ENCODE measurements at regions of chr1 and their contacts with region 1.

Region 1: DNA sequence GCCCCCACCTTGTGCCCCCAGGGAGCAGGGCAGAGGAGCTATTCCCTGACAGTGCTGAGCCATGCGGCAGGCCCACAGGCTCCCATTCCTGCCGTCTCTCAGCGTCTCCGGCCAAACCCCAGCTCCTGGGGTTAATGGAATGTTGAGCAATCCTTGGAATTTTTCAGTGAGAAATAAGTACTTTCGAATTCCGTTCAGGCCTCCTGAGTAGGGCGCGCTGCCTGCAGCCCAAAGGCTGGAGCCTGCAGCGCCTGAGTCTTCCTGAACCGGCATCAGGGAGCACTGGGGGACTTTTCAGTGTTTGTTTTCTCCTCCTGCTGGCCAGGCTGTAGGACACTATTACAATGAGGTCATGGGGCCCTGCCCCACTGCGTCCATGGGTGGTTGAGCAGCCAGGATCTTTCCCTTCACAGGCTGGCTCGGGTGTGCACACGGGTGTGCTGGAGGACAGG is 33.3 kb upstream of the CSF1 start:
- DNase-seq: peak; percentile 57 to 84 (median 65)
- ATAC-seq: peak; percentile 65 to 94 (median 90)
- H3K4me3 ChIP-seq: peak overlapping the region in 2 of 12 donors; percentile 2 to 13
- H3K27ac ChIP-seq: peak overlapping the region; percentile 62 to 86 (median 80)
- H3K4me1 ChIP-seq: peaks cover 0 to 50% (median 20%) of the 10 kb centered on the region in 12 donors
- H3K27me3 ChIP-seq: no peaks in the 10 kb centered on the region
- CTCF ChIP-seq: peak in 8 of 12 donors; percentile 8 to 44 (median 25)
- POLR2A ChIP-seq: no peak

Region 2: DNA sequence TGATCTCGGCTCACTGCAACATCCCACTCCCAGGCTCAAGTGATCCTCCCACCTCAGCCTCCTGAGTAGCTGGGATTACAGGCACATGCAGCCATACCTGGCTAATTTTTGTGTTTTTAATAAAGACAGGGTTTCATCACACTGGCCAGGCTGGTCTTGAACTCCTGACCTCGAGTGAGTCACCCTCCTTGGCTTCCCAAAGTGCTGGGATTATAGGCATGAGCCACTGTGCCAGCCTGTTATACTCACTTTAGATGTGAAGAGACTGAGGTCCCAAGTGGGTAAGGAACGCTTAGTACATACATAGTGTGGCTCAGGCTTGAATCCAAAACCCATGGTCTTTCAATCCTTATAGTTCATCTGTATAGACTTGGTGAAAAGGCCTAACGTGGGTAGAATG is 49.9 kb before region 1 on chr1:
- intact Hi-C with region 1: loop called in 1 of 10 experiments (anchors 5 kb)
- DNase-seq: no peak
- ATAC-seq: no peak
- H3K4me3 ChIP-seq: no peak overlapping the region
- H3K27ac ChIP-seq: peak overlapping the region in 1 of 12 donors; percentile 61
- H3K4me1 ChIP-seq: peaks cover 0 to 53% (median 29%) of the 10 kb centered on the region in 12 donors
- H3K27me3 ChIP-seq: no peaks in the 10 kb centered on the region
- CTCF ChIP-seq: no peak
- POLR2A ChIP-seq: no peak

Region 3: DNA sequence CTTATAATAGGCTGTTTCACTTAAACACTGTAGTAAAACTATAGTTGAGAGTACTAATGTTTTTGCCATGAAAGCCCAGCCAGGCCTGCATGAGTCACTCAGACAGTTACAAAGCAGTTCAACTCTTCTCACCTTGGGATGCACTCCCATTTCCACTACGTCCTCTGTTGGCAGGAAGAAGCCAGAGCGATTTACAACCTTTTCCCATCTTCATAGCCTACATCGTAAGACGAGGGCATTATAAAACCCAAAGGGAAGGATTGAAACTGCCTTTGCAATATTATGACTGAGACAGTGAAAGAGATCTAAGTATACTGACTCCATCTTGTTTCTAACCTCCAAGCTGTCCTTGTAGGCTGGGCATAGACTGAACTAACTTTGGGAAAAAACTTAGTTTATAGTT is 38.5 kb before region 1 on chr1:
- intact Hi-C with region 1: loop called in 1 of 10 experiments (anchors 5 kb)
- DNase-seq: no peak
- ATAC-seq: no peak
- H3K4me3 ChIP-seq: no peak overlapping the region
- H3K27ac ChIP-seq: peak overlapping the region in 1 of 12 donors; percentile 48
- H3K4me1 ChIP-seq: peaks cover 0 to 7% (median 0%) of the 10 kb centered on the region in 12 donors
- H3K27me3 ChIP-seq: no peaks in the 10 kb centered on the region
- CTCF ChIP-seq: no peak
- POLR2A ChIP-seq: no peak

Region 4: GRCh38 chr1:109923131-109923945 is 46.0 kb after region 1 on chr1:
- intact Hi-C with region 1: no loop called
- DNase-seq: no peak
- ATAC-seq: no peak
- H3K4me3 ChIP-seq: peak overlapping the region in 1 of 12 donors; percentile 4
- H3K27ac ChIP-seq: peak overlapping the region in 2 of 12 donors; percentile 22 to 44
- H3K4me1 ChIP-seq: peaks cover 9 to 29% (median 18%) of the 10 kb centered on the region in 12 donors
- H3K27me3 ChIP-seq: no peaks in the 10 kb centered on the region
- CTCF ChIP-seq: peak; percentile 27 to 63 (median 42)
- POLR2A ChIP-seq: no peak

Region 5: GRCh38 chr1:110188035-110188618 is 310.8 kb after region 1 on chr1:
- intact Hi-C with region 1: no loop called
- DNase-seq: peak in 2 of 5 donors; percentile 46 to 53
- ATAC-seq: peak; percentile 40 to 84 (median 62)
- H3K4me3 ChIP-seq: no peak overlapping the region
- H3K27ac ChIP-seq: peak overlapping the region; percentile 1 to 84 (median 64)
- H3K4me1 ChIP-seq: peaks cover 7 to 59% (median 28%) of the 10 kb centered on the region in 12 donors
- H3K27me3 ChIP-seq: no peaks in the 10 kb centered on the region
- CTCF ChIP-seq: no peak
- POLR2A ChIP-seq: no peak